Gastrocnemius medialis (tissue), 4 donors: ENCODE measurements at regions of chr12 and their contacts with region 1.

Region 1: DNA sequence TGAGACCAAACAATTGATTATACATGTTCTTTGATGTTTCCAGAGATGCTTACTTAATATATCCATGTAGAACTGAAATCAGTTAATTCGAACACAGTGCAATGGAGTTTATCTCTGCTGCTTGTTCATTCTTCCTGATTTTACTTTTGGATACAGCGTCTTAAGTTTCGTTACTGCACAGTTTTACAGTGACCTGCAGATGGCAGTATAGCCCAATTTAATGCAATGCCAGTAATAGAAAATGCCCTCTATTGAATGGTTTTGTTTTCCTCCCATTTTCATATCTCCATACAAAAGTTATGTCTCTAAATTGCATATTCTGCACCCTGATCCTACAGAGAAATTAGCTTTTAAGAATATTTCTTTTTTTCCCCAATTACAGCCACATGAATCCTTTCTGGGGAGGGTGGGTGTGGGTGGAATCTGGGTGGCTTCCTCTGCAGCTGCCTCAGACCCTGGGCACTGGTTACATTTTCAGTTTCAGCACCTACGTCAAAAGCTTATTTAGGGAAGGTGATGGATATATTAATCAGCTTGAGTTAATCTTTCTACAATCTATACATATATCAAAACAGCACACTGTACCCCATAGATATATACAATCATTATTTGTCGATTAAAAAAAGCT is 101.1 kb upstream of the DCD start:
- DNase-seq: no peak
- ATAC-seq: no peak
- H3K4me3 ChIP-seq: no peak overlapping the region
- H3K27ac ChIP-seq: no peak overlapping the region
- H3K4me1 ChIP-seq: no peaks in the 10 kb centered on the region
- H3K27me3 ChIP-seq: peaks cover 0 to 5% (median 0%) of the 10 kb centered on the region in 3 donors
- CTCF ChIP-seq: peak; percentile 42 to 66 (median 46)
- POLR2A ChIP-seq: no peak

Region 2: DNA sequence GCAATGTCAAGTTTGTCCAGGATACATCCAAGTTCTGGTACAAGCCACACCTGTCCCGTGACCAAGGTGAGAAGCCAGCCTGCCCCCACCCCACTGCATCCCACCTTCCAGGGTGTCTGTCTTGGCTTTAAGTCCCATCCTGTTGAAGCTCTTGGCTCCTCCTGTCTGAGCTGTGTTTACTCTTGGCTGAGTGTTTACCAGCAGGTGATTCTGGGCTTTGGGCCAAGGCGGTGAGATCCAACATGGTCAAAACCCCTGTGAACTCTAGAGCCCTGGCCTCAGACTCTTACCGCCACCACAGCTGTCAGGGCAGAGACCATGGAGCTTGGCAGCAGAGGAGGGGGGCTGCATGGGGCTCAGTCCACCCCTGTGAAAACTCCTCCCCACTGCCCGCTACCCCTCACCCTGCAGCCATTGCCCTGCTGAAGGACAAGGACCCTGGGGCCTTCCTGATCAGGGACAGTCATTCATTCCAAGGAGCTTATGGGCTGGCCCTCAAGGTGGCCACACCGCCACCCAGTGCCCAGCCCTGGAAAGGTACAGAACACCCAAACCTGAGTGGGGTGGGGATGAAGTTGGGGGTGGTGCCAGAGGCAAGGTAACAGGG is 1687.8 kb before region 1 on chr12:
- in situ Hi-C with region 1: no loop called
- intact Hi-C with region 1: no loop called
- DNase-seq: peak in 1 of 2 donors; percentile 18
- ATAC-seq: no peak
- H3K4me3 ChIP-seq: no peak overlapping the region
- H3K27ac ChIP-seq: peak overlapping the region; percentile 71 to 74 (median 74)
- H3K4me1 ChIP-seq: peaks cover 33 to 55% of the 10 kb centered on the region in 2 donors
- H3K27me3 ChIP-seq: no peaks in the 10 kb centered on the region
- CTCF ChIP-seq: no peak
- POLR2A ChIP-seq: no peak

Region 3: DNA sequence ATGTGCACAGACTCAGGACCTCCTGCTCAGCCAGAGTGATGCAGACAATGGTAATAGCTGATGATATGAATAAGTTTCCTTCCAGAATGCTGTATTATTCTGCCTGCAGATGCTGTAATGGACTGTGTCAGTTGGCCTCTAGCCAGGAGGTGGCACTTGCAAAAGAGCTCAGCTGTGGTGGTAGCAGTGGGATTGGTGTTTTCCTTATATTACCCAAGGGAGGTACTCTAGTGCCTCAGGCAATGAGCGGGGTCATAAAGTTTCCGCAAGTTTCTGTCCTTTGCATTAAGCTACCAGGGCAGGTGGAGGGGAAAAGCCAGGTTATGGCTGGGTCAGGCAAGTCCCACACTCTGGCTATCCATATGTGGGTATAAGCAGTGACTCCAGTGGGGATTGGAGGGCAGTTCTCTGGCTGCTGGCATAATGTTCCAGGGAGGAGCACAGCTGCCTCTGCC is 91.0 kb after region 1 on chr12:
- in situ Hi-C with region 1: loop called in 1 of 4 experiments (anchors 25 kb)
- intact Hi-C with region 1: no loop called
- DNase-seq: no peak
- ATAC-seq: no peak
- H3K4me3 ChIP-seq: no peak overlapping the region
- H3K27ac ChIP-seq: no peak overlapping the region
- H3K4me1 ChIP-seq: no peaks in the 10 kb centered on the region
- H3K27me3 ChIP-seq: no peaks in the 10 kb centered on the region
- CTCF ChIP-seq: no peak
- POLR2A ChIP-seq: no peak

Region 4: DNA sequence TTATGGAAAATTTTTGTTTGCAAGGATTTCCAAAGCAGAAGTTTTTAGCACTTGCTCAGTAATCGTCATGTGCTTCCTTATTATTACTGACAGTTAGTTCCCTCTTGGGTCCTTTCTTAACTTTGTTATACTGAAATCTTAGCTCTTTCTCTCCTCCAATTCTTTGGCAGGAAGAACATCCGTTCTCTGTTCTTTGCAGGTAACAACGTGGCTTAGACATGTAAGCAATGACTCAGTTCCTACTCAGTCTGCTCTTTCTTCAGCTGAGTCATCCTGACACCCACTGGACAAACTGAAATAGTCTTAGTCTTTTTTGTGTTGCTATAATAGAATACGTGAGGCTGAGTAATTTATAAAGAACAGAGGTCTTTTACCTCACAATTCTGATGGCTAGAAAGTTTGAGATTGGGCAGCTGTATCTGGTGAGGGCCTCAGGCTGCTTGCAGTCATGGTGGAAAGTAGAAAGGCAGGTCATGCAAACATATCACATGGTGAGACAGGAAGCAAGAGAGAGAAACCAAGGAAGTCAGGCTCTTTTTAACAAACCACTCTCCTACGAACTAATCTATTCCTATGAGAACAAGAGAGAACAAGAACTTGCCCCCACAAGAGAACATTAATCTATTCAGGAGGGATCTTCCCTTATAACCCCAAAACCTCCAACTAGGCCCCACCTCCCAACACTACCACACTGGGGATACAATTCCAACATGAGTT is 186.1 kb after region 1 on chr12:
- in situ Hi-C with region 1: loop called in 1 of 4 experiments (anchors 25 kb)
- intact Hi-C with region 1: no loop called
- DNase-seq: no peak
- ATAC-seq: peak in 1 of 2 donors; percentile 60
- H3K4me3 ChIP-seq: no peak overlapping the region
- H3K27ac ChIP-seq: no peak overlapping the region
- H3K4me1 ChIP-seq: no peaks in the 10 kb centered on the region
- H3K27me3 ChIP-seq: no peaks in the 10 kb centered on the region
- CTCF ChIP-seq: no peak
- POLR2A ChIP-seq: no peak

Region 5: DNA sequence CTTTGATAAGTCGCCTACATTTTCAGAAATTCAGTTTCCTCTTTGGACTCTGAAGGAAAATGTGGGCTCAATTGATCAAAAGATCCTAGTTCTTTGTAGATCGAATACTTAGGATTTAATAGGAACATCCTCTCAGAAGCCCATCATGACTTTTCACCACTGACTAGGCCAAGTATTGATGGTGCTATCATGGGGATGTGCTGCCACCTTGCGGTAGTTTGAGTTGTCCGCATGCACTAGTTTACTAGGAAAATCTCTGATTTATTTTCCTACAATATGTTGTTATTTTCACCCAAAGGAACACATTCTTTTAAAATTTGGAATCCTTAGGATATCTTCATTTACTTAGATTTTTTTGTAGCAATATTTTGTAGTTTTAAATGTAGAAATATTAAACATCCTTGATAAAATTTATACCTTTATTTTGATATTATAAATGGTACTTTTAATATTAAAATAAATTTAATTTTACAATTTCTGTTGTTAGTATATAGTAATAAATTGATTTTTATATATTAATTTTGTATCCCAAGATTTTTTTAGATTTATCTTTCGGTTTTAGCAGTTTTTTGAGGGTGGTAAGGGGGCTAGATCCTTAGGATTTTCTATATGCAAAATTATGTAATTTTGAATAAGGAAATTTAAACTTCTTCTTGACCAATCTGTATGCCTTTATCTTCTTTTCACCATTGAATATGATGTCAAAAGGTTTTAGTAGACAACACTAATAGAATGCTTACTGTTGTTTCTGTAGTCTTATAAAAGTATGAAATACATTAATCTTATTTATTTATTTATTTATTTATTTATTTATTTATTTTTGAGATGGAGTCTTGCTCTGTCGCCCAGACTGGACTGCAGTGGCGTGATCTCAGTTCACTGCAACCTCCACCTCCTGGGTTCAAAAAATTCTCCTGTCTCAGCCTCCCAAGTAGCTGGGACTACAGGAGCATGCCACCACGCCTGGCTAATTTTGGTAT is 324.0 kb after region 1 on chr12:
- in situ Hi-C with region 1: no loop called
- intact Hi-C with region 1: loop called (anchors 10 kb)
- DNase-seq: peak; percentile 30 to 34
- ATAC-seq: peak in 1 of 2 donors; percentile 41
- H3K4me3 ChIP-seq: no peak overlapping the region
- H3K27ac ChIP-seq: no peak overlapping the region
- H3K4me1 ChIP-seq: no peaks in the 10 kb centered on the region
- H3K27me3 ChIP-seq: no peaks in the 10 kb centered on the region
- CTCF ChIP-seq: peak; percentile 63 to 88 (median 68)
- POLR2A ChIP-seq: no peak